ENCODE measurements at regions of chr1 and their contacts with region 1.

Region 1: DNA sequence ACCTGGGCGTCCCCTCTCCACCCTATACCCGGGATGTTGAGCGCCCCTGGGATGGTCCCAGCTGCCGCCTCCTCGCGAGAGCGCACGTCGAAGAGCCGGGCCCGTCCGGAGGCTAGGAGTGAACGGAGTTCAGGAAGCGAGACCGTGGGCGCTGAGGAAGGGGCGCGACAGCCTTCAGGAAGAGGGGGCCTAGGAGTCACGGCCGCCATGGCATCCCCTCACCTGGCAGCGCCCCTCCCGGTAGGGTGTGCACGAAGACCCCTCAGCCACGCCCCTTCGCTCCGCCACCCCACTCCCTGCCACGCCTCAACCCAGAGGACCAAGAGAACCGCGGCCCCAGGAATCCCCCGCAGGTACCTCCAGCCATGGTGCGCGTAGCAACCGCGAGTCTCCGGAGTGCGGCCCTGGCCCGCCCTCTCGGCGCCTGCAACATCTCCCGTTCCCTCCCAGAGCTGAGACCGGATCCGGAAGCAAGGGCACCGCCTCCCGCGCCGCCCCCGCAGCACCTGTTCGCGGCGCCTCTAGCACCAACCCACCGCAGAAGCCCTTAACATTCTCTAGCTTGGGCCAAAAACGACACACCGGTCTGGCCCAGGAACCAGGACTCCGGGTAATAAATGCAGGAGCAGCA is at the start of gene TSTD1:
- DNase-seq: peak; percentile 94
- ATAC-seq: peak; percentile 88
- H3K4me3 ChIP-seq: peak within 1 kb of the TSS; percentile 56 to 98 (median 94)
- H3K4me3 Mint-ChIP-seq: peak within 1 kb of the TSS; percentile 93
- H3K27ac ChIP-seq: peak within 1 kb of the TSS; percentile 81 to 94
- H3K27ac Mint-ChIP-seq: peak within 1 kb of the TSS; percentile 97
- H3K4me1 ChIP-seq: peaks cover 50 to 75% of the 10 kb centered on the region in 2 donors
- H3K4me1 Mint-ChIP-seq: peaks cover 55% of the 10 kb centered on the region
- H3K27me3 ChIP-seq: no peaks in the 10 kb centered on the region
- H3K27me3 Mint-ChIP-seq: no peaks in the 10 kb centered on the region
- CTCF ChIP-seq: no peak
- total RNA-seq, gene TSTD1: 85.6 and 94.4 TPM in 2 replicates

Region 2: GRCh38 chr1:161021165-161021960 is 17.3 kb before region 1 on chr1:
- CTCF ChIA-PET with region 1: interaction called, 8 read pairs
- POLR2A ChIA-PET with region 1: interaction called, 8 read pairs
- intact Hi-C with region 1: loop called (anchors 2 kb)
- DNase-seq: peak; percentile 92
- ATAC-seq: peak; percentile 93
- H3K4me3 ChIP-seq: peak overlapping the region; percentile 50 to 83 (median 81)
- H3K4me3 Mint-ChIP-seq: peak overlapping the region; percentile 96
- H3K27ac ChIP-seq: peak overlapping the region; percentile 55 to 85
- H3K27ac Mint-ChIP-seq: peak overlapping the region; percentile 91
- H3K4me1 ChIP-seq: peaks cover 22 to 23% of the 10 kb centered on the region in 2 donors
- H3K4me1 Mint-ChIP-seq: peaks cover 26% of the 10 kb centered on the region
- H3K27me3 ChIP-seq: no peaks in the 10 kb centered on the region
- H3K27me3 Mint-ChIP-seq: no peaks in the 10 kb centered on the region
- CTCF ChIP-seq: no peak

Region 3: DNA sequence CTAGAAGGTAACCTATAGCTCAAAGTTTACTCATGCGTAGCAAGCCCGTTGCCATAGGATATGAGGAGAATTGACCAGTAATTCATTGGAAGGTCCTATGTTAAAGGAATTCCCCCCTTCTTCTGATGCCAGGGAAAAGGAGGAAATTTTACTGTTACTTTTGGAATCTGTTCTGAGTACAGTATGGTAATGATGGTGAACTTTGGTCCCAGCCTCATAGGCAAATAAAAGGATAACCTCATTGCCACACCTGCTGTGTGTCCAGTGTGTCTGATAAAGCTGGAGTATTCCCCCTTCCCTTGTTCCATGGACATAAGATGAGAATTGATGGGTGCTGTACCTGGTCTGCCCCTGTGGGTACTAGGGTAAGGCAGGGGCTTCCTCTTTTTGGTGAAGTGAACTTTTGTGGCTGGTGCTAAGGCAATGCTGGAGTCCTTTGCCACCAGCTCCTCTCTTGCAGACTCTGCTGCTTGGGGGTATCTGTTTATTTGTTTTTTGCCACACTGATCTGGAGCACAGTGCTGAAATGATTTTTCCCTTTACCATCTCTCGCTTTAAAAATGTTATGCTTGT is 248.9 kb after region 1 on chr1:
- CTCF ChIA-PET with region 1: no interaction called
- POLR2A ChIA-PET with region 1: no interaction called
- intact Hi-C with region 1: no loop called
- DNase-seq: no peak
- ATAC-seq: no peak
- H3K4me3 ChIP-seq: no peak overlapping the region
- H3K4me3 Mint-ChIP-seq: no peak overlapping the region
- H3K27ac ChIP-seq: no peak overlapping the region
- H3K27ac Mint-ChIP-seq: no peak overlapping the region
- H3K4me1 ChIP-seq: no peaks in the 10 kb centered on the region
- H3K4me1 Mint-ChIP-seq: peaks cover 7% of the 10 kb centered on the region
- H3K27me3 ChIP-seq: no peaks in the 10 kb centered on the region
- H3K27me3 Mint-ChIP-seq: peaks cover 6% of the 10 kb centered on the region
- CTCF ChIP-seq: no peak

Region 4: GRCh38 chr1:161486806-161487741 is 448.4 kb after region 1 on chr1:
- CTCF ChIA-PET with region 1: no interaction called
- POLR2A ChIA-PET with region 1: no interaction called
- intact Hi-C with region 1: no loop called
- DNase-seq: peak; percentile 80
- ATAC-seq: peak; percentile 78
- H3K4me3 ChIP-seq: no peak overlapping the region
- H3K4me3 Mint-ChIP-seq: no peak overlapping the region
- H3K27ac ChIP-seq: no peak overlapping the region
- H3K27ac Mint-ChIP-seq: no peak overlapping the region
- H3K4me1 ChIP-seq: peaks cover 3 to 6% of the 10 kb centered on the region in 2 donors
- H3K4me1 Mint-ChIP-seq: peaks cover 8% of the 10 kb centered on the region
- H3K27me3 ChIP-seq: peaks cover 0 to 36% (median 7%) of the 10 kb centered on the region in 4 experiments
- H3K27me3 Mint-ChIP-seq: peaks cover 36% of the 10 kb centered on the region
- CTCF ChIP-seq: peak; percentile 82

Measured in B cell (primary cell).